GM12878 (cell line): ENCODE measurements at regions of chr2 and their contacts with region 1.

Region 1: DNA sequence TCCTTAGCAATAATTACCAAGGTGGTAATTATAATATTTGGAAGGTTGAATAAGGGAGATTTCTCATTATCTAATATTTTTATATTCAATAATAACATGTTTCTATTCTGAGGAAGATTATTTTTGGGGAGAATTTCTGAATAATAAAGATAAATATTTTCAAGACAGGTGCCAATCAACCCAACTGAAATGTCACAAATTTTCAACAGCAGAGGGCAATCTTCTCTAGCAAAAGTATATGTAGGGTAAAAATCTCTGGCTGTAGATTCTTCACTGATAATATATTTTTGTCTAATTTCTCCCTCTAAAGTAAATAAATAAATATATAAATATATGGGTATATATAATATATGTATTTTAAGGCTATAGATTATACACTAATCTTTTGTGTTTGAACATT is 1187.2 kb upstream of the CRIM1 start:
- DNase-seq: no peak
- ATAC-seq: no peak
- H3K4me3 ChIP-seq: no peak overlapping the region
- H3K27ac ChIP-seq: no peak overlapping the region
- H3K4me1 ChIP-seq: no peaks in the 10 kb centered on the region
- H3K27me3 ChIP-seq: no peaks in the 10 kb centered on the region
- CTCF ChIP-seq: no peak; a peak in 1 of 6 replicates
- EP300 ChIP-seq: no peak
- POLR2A ChIP-seq: no peak
- RAD21 ChIP-seq: peak; percentile 21; the same call in 1 of the 2 replicates

Region 2: GRCh38 chr2:35343135-35343534 is 174.8 kb after region 1 on chr2:
- CTCF ChIA-PET with region 1: no interaction called
- POLR2A ChIA-PET with region 1: no interaction called
- RAD21 ChIA-PET with region 1: no interaction called
- SMC1A ChIA-PET with region 1: no interaction called
- in situ Hi-C with region 1: no loop called
- intact Hi-C with region 1: loop called (anchors 2 kb)
- DNase-seq: no peak
- ATAC-seq: peak; percentile 61; the same call in 2 of the 3 replicates
- H3K4me3 ChIP-seq: no peak overlapping the region
- H3K27ac ChIP-seq: no peak overlapping the region
- H3K4me1 ChIP-seq: no peaks in the 10 kb centered on the region
- H3K27me3 ChIP-seq: no peaks in the 10 kb centered on the region
- CTCF ChIP-seq: peak; percentile 44 to 57 (median 46)
- EP300 ChIP-seq: no peak
- POLR2A ChIP-seq: no peak
- RAD21 ChIP-seq: peak; percentile 37